IMR-90 (cell line): ENCODE measurements at regions of chr11 and their contacts with region 1.

Region 1: DNA sequence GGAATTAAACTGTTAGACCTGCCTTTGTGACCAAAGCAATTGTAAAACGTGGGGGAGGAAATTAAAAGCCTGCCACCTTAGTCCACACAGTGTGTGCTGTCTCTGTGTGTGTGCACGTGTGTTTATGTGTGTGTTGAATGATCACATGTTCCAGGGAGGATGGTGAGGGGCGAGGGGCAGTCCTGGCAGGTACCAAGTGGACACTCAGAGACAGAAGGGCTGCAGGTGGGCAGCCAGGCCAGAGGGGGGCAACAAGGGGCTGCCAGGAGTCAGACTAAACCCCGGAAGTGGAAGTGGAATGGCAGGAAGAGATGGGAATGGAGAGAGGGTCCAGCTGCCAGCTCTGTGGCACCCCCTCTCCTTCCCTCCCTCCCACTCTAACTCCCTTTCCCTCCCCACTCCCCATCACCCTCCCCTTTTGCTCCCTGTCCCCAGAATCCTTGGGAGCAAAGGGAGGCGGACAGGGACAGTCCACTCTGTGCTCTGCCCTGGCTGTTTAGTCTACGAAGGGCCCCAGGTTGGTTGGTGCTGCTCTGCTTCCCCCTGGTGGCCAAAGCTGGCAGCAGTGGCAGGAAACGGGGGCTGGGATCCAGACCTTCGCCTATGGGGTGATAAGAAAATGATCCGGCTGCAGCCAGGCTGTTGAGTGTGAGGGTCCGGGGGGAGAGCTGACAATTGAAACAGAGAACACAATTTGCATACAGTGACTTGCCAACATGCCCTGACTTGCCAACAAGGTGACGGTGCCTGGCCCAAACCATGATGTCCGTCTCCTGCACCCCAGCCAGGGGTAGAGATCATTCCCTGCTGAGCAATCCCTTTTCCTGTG is 24.4 kb downstream of the P2RY2 start:
- DNase-seq: peak; percentile 60
- ATAC-seq: peak; percentile 96
- H3K4me3 ChIP-seq: no peak overlapping the region
- H3K27ac ChIP-seq: peak overlapping the region; percentile 17; the same call in 1 of the 2 replicates
- H3K4me1 ChIP-seq: peaks cover 14% of the 10 kb centered on the region
- H3K27me3 ChIP-seq: 0 out of 2 replicates have a peak, but pooled peaks cover 3% of the 10 kb centered on the region
- CTCF ChIP-seq: peak; percentile 90
- POLR2A ChIP-seq: peak; percentile 47; the same call in 1 of the 2 replicates
- RAD21 ChIP-seq: peak; percentile 91

Region 2: DNA sequence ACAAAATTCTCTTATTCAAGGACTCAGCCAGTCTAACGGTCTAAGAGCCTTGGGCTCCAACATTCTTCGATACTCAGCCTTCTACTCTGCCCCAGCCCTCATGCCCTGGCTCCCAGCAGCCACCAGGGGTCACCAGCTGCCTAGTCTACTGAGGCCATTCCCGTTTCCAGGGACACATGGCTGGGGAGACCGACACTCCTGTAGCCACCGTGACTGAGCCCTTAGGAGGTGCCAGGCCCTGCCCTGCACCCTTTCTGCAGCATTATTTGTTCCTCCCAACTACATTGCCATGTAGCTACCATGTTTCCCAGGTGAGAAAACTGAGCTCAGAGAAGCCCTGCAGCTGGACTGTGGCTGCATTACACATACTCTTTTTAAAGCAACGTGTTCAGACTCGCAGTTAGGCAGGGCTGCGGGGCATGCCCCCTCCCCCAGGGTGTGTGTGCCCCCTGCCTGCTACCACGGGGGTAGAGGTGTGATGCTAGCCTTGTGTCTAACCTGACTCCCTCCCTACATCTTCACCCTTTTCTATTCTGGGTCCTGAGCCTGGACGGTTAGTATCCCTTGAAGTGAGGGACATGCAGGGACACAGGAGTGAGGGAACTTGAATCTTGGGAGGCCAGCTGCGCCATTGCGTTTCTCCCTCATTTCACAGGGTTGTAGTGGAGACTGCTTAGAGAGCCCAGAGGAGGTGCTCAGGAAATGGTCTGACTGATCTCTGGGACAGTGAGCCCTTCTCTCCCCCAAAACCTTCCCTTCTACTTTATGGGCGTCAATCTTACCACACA is 410.8 kb before region 1 on chr11:
- CTCF ChIA-PET with region 1: interaction called, 6 read pairs
- POLR2A ChIA-PET with region 1: no interaction called
- dilution Hi-C with region 1: no loop called
- in situ Hi-C with region 1: loop called (anchors 5 kb)
- intact Hi-C with region 1: loop called (anchors 1 kb)
- DNase-seq: peak; percentile 71
- ATAC-seq: peak; percentile 94
- H3K4me3 ChIP-seq: no peak overlapping the region
- H3K27ac ChIP-seq: no peak overlapping the region
- H3K4me1 ChIP-seq: peaks cover 9% of the 10 kb centered on the region
- H3K27me3 ChIP-seq: no peaks in the 10 kb centered on the region
- CTCF ChIP-seq: peak; percentile 91
- POLR2A ChIP-seq: no peak
- RAD21 ChIP-seq: peak; percentile 96

Region 3: DNA sequence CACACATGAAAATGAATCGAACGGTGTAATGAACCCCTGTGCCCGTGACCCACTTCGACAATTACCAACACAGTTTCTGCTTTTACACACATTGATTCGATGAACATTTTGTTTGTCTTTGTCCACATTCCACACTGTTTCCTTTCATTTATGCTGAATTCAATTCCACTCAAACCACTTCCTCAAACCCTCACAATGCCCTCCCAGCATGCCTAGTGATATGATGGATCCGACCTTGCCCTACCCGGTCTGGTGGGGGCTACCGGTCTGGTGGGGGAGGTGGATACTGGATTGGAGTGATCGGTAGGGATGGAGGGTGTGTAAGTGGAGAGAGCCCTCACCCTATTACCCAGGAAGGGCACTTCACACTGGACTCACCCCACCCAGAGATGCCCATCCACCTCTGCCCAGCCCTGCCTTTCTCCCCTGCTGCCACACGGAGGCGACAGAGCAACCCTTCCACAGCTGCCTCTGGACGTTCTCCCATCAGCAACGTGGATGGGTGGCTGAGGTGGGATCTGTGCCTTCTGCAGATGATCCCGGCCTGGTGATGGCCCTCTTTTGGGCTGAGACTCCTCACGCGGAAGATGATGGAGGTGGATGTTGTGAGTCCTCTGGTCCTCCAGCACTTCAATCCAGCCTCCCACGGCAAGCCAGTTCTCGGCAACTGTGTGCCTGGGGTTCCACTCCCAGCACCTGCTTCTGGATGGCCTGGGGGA is 57.4 kb before region 1 on chr11:
- CTCF ChIA-PET with region 1: interaction called, 10 read pairs
- POLR2A ChIA-PET with region 1: interaction called, 15 read pairs
- dilution Hi-C with region 1: no loop called
- in situ Hi-C with region 1: no loop called
- intact Hi-C with region 1: loop called (anchors 1 kb)
- DNase-seq: peak; percentile 33
- ATAC-seq: peak; percentile 79
- H3K4me3 ChIP-seq: no peak overlapping the region
- H3K27ac ChIP-seq: no peak overlapping the region
- H3K4me1 ChIP-seq: peaks cover 7% of the 10 kb centered on the region
- H3K27me3 ChIP-seq: no peaks in the 10 kb centered on the region; the same call in 1 of the 2 replicates
- CTCF ChIP-seq: peak; percentile 78
- POLR2A ChIP-seq: no peak
- RAD21 ChIP-seq: peak; percentile 78